ENCODE measurements at regions of chr7 and their contacts with region 1.

Region 1: GRCh38 chr7:7681179-7681935 is 37.0 kb downstream of the RPA3 start:
- H3K4me3 Mint-ChIP-seq: no peak overlapping the region
- H3K27ac Mint-ChIP-seq: no peak overlapping the region
- H3K4me1 Mint-ChIP-seq: no peaks in the 10 kb centered on the region
- H3K27me3 Mint-ChIP-seq: no peaks in the 10 kb centered on the region

Region 2: DNA sequence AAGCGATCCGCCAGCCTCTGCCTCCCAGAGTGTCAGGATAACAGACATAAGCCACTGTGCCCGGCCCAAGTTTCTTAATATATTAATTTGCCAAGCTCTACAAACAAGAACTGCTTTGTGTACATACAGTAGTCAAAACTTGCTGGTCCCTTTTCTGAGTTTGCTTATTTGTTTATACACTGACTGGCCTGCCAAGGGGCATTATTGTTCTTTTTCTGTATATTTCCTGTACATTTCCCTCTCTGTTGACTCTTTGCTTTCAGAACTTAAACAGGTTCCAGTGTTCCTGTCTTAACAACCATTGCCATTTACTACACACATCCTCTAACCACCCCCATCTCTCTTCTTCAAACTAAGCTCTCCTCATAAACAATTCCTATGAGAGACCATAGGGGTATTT is 98.5 kb after region 1 on chr7:
- intact Hi-C with region 1: no loop called
- H3K4me3 Mint-ChIP-seq: no peak overlapping the region
- H3K27ac Mint-ChIP-seq: no peak overlapping the region
- H3K4me1 Mint-ChIP-seq: peaks cover 7% of the 10 kb centered on the region
- H3K27me3 Mint-ChIP-seq: no peaks in the 10 kb centered on the region

Region 3: DNA sequence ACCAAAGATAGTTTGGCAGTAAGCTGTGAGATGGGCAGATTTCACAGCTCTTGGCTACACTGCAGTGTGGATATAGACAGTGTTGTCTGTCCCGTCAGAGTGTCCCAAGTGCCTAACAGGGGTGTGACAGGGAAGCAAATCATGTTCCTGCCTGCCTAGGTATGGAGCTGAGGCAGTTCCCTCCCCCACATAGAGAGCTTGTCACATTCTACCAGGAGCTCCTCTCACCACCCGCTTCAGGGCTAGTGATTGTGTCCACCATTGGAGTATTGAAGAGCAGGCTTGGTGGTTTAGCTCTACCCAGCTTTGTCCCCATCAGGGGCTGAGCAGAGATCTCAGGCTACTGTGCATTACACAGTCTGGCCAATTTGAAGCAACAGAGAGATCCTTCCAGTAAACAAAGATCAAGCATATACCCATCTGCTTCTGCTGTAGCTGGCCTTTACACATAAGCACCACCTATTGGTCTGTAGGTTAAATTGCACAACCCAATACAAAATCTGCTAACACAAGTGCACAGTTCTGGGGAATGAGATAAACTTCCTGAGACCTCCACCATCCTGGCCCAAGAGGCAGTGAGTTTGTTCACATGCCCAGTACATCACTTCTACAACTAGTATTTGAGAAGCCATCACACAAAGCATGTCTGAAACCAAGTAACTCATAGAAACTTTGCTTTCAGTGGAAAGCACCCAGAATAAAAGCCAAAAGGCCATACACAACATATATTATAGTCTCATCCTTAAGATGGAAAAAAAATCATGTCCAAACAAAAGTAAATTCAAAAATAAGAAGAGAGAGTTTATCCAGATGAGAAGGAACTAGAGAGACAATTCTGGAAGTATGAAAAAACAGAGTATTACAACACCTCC is 354.5 kb after region 1 on chr7:
- intact Hi-C with region 1: loop called (anchors 2 kb)
- H3K4me3 Mint-ChIP-seq: no peak overlapping the region
- H3K27ac Mint-ChIP-seq: no peak overlapping the region
- H3K4me1 Mint-ChIP-seq: no peaks in the 10 kb centered on the region
- H3K27me3 Mint-ChIP-seq: no peaks in the 10 kb centered on the region

Region 4: DNA sequence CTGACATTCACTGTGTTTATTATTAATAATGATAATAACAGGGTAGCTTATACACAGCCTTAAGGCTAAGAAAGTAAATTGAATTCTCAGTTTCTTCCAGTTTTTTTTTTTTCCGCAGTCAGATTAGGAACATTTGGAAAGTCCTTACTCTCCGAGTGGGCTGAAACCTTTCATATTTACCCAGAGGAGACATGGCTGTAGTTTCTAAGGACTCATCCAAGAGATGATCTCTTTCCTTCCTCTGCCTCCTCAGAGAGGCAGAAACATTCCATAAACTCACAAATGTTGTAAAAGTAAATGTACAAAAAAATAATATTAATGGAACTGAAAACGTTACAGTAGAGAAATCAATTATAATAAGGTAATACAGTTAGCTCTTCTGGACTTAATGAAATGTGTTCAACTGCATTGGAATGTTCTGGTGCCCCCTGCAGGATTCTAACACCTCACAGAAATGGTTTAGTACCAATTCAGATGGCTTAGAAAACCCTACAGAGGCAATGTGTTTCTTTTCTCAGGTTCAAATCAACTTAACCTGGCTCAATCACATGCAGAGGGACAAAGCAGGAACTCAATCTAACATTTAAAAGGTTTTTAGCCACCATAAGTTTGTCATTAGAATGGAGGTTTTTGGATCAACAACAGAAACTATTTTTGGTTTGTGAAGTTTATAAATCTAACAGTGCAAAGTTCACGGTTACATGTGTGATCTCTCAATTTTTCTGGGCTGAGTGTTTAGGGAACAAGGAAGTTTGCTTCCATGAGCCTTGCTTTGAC is 508.9 kb after region 1 on chr7:
- intact Hi-C with region 1: loop called (anchors 1 kb)
- H3K4me3 Mint-ChIP-seq: no peak overlapping the region
- H3K27ac Mint-ChIP-seq: no peak overlapping the region
- H3K4me1 Mint-ChIP-seq: peaks cover 11% of the 10 kb centered on the region
- H3K27me3 Mint-ChIP-seq: no peaks in the 10 kb centered on the region

Region 5: DNA sequence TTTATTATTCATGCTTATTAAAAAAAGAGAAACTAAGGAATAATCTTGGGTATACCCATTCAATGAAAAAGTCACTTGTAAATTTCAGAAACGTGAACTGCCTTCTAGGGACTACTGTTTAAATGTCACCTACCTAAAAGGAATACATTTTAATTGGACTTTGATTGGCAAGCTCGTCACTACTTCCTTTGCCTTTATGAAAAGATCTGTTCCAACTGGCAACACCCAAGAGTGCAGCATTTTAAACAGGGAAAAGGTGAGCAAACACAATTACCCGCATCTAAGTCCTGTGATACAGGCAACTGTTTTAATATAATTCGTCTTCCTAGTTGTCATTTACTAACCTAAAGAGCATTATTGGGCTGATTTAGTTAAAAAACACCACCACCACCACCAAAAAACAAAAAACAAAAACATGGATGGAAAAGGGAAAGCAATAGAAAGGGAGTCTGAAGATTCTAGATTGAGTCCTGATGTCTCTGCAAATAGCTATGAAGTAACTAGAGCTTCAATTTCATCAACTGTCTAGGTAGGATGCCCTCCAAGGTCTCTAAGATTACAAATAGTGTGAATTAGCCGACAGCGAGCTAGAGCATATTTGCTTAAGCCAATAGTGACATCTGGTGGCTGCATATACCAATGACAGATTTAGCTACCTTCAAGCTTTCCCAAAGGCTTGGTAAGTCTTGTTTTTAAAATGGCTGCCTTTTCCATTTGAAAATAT is 614.4 kb after region 1 on chr7:
- intact Hi-C with region 1: loop called (anchors 5 kb)
- H3K4me3 Mint-ChIP-seq: no peak overlapping the region
- H3K27ac Mint-ChIP-seq: no peak overlapping the region
- H3K4me1 Mint-ChIP-seq: no peaks in the 10 kb centered on the region
- H3K27me3 Mint-ChIP-seq: peaks cover 3% of the 10 kb centered on the region